ENCODE measurements at regions of chr9 and their contacts with region 1.

Region 1: GRCh38 chr9:7976167-7976755 is 176.7 kb upstream of the DMAC1 start:
- DNase-seq: peak; percentile 94
- H3K4me3 ChIP-seq: peak overlapping the region; percentile 44
- H3K27ac ChIP-seq: peak overlapping the region; percentile 93
- H3K4me1 ChIP-seq: peaks cover 78% of the 10 kb centered on the region
- CTCF ChIP-seq: no peak

Region 2: DNA sequence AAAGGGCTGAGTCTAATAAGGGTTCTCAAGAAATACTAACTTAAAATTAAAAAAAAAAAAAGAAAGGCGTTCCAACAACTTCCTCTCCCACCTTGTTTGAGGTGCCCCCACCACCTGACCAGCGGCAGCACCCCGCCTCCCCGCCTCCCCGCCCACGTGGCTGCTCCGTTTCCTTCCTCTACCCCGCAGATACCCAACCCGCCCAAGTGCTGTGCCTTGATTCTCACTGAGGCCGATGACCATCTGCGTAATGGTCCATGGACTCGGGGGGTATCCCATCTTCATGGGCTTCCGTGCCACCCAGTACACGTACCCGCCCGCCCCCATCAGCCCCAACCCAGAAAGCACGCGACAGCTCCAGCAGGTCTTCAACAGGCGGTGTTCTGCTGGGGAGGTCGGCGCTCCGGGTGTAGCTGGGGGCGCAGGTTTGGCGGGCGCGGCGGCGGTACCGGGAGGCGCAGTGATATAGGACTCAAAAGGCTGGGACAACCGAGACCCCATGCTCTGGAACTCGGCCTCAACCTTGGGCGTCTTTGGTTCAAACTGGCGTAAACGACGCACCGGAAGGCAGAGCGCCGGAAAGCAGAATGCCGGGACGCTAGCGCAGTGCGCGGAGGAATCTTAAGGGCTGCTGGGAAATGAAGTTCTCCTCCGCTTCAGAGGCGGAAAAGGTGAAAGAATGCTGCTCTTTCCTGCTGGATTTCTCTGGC is 176.9 kb before region 1 on chr9 and contains the start of gene DMAC1:
- CTCF ChIA-PET with region 1: no interaction called
- POLR2A ChIA-PET with region 1: no interaction called
- intact Hi-C with region 1: loop called (anchors 5 kb)
- DNase-seq: peak; percentile 88
- H3K4me3 ChIP-seq: peak within 1 kb of the TSS; percentile 80
- H3K27ac ChIP-seq: peak within 1 kb of the TSS; percentile 59
- H3K4me1 ChIP-seq: peaks cover 15% of the 10 kb centered on the region
- CTCF ChIP-seq: no peak
- total RNA-seq, gene DMAC1: 29.1 and 30.5 TPM in 2 replicates